Cardiac septum (tissue), 1 donor: ENCODE measurements at regions of chr12 and their contacts with region 1.

Region 1: GRCh38 chr12:85468356-85469157 is 188.5 kb downstream of the ALX1 start:
- DNase-seq: no peak

Region 2: DNA sequence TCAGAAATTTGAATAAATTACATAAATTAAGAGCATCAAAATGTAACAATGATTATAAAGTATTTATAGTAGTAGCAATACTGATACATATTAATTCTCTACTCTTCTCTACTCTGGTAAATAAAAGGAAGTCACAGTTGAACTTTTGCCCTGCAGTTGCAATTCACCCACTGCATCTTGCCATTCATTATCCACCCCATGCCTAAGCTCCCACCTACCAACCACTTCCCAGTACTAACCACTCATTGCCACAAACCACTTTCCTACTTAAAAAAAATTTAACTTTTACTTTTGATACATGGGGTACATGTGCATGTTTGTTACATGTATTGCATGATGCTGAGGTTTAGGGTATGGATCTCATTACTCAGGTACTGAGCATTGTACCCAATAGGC is 193.6 kb after region 1 on chr12:
- intact Hi-C with region 1: no loop called
- DNase-seq: no peak

Region 3: GRCh38 chr12:85872497-85873091 is 404.0 kb after region 1 on chr12:
- intact Hi-C with region 1: loop called (anchors 2 kb)
- DNase-seq: no peak

Region 4: GRCh38 chr12:85920324-85920947 is 451.9 kb after region 1 on chr12:
- intact Hi-C with region 1: loop called (anchors 5 kb)
- DNase-seq: no peak